ENCODE measurements at regions of chr2 and their contacts with region 1.

Region 1: DNA sequence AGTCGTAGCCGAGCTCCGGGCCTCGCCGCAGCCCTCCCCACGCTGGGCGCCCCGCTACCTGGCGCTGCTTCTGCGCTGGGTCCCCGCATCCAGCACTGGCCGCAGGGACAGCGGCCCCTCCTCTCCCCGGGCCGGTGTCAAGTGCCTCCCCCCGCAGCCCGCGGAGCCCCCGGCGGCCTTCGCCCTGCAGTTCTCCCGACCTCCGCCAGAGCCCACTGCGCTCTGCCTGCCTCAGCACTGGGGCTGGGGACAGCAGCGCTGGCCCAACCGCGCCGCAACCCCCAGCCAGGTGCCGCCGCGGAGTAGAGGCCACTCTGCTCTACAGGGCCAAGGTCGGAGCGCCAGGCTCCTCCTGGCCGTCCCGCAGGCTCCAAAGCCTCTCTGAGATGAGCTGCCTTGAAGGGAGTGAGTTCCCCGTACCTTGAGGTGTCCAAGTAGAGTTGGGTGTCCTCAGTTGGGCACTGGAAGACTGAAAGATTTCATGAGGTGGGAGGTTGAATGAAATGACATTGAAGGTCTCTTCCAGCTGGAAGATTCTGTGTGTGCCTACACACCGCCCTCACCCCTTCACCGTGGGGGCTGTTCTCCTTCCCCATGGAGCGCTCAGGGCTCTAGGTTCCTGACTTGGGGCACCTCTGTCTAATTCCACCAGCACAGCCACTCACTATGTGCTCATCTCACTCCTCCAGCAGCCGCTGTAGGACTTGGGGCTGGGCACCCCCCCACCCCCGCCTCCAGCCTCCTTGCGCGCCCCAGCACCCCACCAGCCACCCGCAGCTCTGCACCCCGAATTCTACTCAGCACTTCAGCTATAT is 854 bp upstream of the DNMT3A start:
- DNase-seq: peak; percentile 85 to 94 (median 92)
- ATAC-seq: peak; percentile 88 to 91
- H3K4me3 ChIP-seq: peak overlapping the region; percentile 98
- H3K27ac ChIP-seq: peak overlapping the region; percentile 39
- H3K4me1 ChIP-seq: peaks cover 5% of the 10 kb centered on the region
- H3K27me3 ChIP-seq: no peaks in the 10 kb centered on the region

Region 2: DNA sequence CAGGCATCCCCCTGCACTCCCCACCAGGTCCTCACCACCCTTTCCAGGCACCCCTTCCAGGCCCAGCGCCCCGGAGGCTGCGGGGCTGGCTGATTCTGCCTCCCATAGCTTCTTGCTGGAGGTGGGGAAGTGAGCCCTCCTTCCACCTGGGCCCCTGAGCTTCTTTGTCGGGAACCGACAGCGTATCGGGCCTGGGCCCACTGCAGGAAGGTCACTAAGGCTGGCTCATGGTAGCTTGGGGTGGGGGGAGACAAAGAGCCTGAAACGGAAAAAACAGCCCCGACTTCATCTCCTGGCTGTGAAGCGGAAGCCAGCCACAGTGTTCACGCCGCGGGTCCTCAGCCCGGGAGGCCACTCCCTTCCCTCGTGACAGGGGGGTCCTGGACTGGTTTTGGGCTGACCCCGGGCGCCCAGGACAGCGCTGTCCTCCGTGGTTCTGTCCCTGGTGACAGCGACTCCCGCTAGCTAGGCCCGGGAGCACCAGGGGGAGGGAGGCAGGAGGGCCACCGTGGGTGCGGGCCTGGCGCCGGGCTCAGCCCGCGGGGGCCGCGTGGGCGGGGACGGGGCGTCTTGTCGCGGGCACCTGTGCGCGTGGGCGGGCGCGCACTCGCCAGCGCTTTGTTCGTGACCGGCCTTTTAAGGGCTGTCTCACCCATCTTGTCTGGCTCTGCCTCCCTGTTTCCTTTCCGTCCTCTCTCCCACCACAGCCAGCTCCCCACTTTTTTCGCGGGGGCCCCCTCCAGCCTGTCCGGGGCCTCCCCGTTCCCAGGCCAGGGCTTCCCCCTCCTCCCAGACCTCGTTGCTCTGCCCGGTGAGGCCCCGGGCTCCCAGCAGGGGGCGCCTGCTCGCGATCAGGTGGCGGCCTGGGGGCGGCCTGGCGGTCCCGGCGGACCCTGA is 65.8 kb before region 1 on chr2:
- intact Hi-C with region 1: loop called in 1 of 4 experiments (anchors 10 kb)
- DNase-seq: peak; percentile 75 to 93 (median 91)
- ATAC-seq: peak; percentile 64 to 72
- H3K4me3 ChIP-seq: peak overlapping the region; percentile 24
- H3K27ac ChIP-seq: peak overlapping the region; percentile 18
- H3K4me1 ChIP-seq: peaks cover 2% of the 10 kb centered on the region
- H3K27me3 ChIP-seq: no peaks in the 10 kb centered on the region

Region 3: GRCh38 chr2:25376750-25377621 is 34.4 kb after region 1 on chr2:
- intact Hi-C with region 1: loop called in 1 of 4 experiments (anchors 2 kb)
- DNase-seq: peak; percentile 87 to 95 (median 93)
- ATAC-seq: peak; percentile 97 to 98
- H3K4me3 ChIP-seq: no peak overlapping the region
- H3K27ac ChIP-seq: no peak overlapping the region
- H3K4me1 ChIP-seq: no peaks in the 10 kb centered on the region
- H3K27me3 ChIP-seq: no peaks in the 10 kb centered on the region

Region 4: GRCh38 chr2:25402477-25402876 is 59.9 kb after region 1 on chr2:
- intact Hi-C with region 1: no loop called
- DNase-seq: no peak
- ATAC-seq: no peak
- H3K4me3 ChIP-seq: no peak overlapping the region
- H3K27ac ChIP-seq: no peak overlapping the region
- H3K4me1 ChIP-seq: no peaks in the 10 kb centered on the region
- H3K27me3 ChIP-seq: no peaks in the 10 kb centered on the region

Measured in right cardiac atrium (tissue), 5 donors.